ENCODE measurements at regions of chr21 and their contacts with region 1.

Region 1: DNA sequence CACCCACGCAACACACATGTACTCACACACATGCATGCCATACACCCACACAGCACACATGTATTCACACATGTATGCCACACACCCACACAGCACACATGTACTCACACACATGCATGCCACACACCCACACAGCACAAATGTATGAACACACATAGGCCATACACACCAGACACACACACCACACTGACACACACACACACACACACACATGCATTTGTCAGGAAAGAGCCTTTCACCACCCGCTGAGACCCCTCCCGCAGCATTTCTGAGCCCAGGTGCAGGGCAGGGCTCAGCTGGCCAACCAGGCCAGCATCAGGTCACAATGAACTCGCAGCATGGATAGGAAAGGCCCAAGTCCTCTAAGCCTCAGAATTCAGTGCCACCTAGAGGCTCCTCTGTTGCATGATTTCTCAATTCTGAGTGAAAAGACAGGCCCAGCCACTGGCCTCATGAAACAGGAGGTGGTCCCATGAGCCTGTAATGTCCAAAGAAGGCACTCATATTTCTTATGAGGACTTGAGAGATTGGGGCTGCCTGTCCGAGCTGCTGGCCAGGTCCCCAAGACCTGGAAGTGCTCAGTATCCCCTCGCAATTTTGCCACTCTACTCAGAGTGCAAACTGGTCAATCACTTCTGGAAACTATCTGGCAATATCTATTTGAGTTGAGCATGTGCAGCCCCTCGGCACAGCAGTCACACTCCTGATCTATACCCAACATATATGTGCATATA is 57.3 kb downstream of the PSMG1 start:
- DNase-seq: peak; percentile 73
- H3K4me3 Mint-ChIP-seq: no peak overlapping the region
- H3K27ac Mint-ChIP-seq: no peak overlapping the region
- H3K4me1 Mint-ChIP-seq: peaks cover 9% of the 10 kb centered on the region
- H3K27me3 Mint-ChIP-seq: peaks cover 22% of the 10 kb centered on the region

Region 2: DNA sequence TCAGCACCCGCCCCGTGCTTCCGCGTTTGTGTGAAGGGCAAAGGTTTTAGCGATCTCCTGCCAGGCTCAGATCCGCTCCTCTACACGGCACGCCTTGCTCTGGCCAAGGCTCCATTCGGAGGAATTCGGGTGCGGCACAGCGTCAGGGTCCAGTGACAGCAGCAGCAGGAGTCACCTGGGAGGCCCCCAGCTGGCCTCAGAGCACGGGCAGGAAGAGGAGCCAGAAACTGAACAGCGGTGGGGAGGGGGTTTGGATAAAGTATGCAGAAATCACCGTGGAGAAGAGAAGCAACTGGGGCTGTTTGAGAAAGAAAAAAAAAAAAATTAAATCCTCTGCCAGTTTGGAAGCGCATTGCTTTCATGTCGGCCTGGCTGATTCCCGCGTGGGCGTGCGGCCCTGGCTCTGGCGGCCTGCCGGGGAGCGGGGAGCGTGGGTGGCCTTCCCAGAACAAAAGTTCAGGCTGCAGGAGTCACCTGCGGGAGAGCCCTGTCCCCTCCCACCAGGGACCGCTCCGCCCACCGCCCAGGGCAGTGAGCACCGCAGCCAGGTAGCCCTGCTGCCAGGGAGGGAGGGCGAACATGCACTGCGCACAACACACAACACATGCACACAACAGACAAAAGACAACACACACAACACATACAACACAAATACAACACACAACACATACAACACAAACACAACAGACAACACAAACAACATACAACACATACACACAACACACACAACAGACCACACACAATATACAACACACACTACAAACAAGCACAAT is 212.6 kb before region 1 on chr21:
- intact Hi-C with region 1: loop called (anchors 10 kb)
- DNase-seq: no peak
- H3K4me3 Mint-ChIP-seq: no peak overlapping the region
- H3K27ac Mint-ChIP-seq: no peak overlapping the region
- H3K4me1 Mint-ChIP-seq: peaks cover 4% of the 10 kb centered on the region
- H3K27me3 Mint-ChIP-seq: peaks cover 11% of the 10 kb centered on the region

Region 3: GRCh38 chr21:39159342-39160063 is 33.6 kb after region 1 on chr21:
- intact Hi-C with region 1: loop called (anchors 2 kb)
- DNase-seq: no peak
- H3K4me3 Mint-ChIP-seq: no peak overlapping the region
- H3K27ac Mint-ChIP-seq: no peak overlapping the region
- H3K4me1 Mint-ChIP-seq: no peaks in the 10 kb centered on the region
- H3K27me3 Mint-ChIP-seq: no peaks in the 10 kb centered on the region

Region 4: GRCh38 chr21:39232861-39233291 is 107.0 kb after region 1 on chr21:
- intact Hi-C with region 1: no loop called
- DNase-seq: no peak
- H3K4me3 Mint-ChIP-seq: no peak overlapping the region
- H3K27ac Mint-ChIP-seq: no peak overlapping the region
- H3K4me1 Mint-ChIP-seq: peaks cover 6% of the 10 kb centered on the region
- H3K27me3 Mint-ChIP-seq: no peaks in the 10 kb centered on the region

Measured in activated CD4-positive, alpha-beta T cell treated with anti-CD3 and anti-CD28 coated beads, Interleukin-2, amount 10 ng/mL, durations not matched to agents 24 days and 14 days (primary cell).